A549 (cell line): ENCODE measurements at regions of chr11 and their contacts with region 1.

Region 1: DNA sequence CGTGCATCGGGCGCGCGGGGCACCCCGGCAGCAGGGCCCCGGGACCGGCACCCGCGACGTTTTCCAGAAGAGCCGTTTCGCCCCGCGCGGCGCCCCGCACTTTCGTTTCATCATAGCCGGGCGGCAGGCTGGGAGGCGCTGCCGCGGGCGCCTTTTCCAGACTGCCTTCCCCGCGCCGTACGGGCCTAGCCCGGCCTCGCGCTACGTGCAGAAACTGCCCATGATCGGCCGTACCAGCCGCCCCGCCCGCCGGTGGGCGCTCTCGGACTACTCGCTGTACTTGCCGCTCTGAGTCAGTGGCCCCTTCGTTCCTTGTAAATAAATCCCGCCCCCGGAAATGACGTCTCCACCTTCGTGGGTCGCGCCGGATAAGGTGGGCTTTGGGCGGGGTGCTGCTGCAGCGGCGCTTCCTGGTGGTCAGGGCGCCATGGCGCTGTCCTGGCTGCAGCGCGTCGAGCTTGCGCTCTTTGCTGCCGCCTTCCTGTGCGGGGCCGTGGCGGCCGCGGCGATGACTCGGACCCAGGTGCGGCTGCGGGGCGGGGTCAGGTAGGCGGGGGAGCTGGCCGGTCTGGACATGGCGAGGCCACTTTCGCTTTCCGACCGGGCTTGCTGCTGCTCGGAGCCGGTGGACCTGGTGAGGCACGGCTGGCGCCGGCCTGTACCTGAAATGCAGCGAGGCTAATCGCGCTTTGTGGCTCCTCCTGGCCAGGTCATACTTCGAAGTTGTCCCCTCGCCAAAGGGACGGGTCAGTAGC is at the start of gene TMEM179B:
- DNase-seq: peak; percentile 93 to 98
- ATAC-seq: peak; percentile 77 to 79
- H3K4me3 ChIP-seq: peak within 1 kb of the TSS; percentile 78
- H3K27ac ChIP-seq: peak within 1 kb of the TSS; percentile 89 to 96
- H3K4me1 ChIP-seq: peaks cover 33% of the 10 kb centered on the region
- CTCF ChIP-seq: no peak; the same call in 2 of the 3 replicates
- EP300 ChIP-seq: no peak
- POLR2A ChIP-seq: peak; percentile 97
- RAD21 ChIP-seq: peak; percentile 29 to 38; a peak in 2 of 5 replicates
- polyA plus RNA-seq, gene TMEM179B: 64.7 and 105 TPM in 2 replicates

Region 2: DNA sequence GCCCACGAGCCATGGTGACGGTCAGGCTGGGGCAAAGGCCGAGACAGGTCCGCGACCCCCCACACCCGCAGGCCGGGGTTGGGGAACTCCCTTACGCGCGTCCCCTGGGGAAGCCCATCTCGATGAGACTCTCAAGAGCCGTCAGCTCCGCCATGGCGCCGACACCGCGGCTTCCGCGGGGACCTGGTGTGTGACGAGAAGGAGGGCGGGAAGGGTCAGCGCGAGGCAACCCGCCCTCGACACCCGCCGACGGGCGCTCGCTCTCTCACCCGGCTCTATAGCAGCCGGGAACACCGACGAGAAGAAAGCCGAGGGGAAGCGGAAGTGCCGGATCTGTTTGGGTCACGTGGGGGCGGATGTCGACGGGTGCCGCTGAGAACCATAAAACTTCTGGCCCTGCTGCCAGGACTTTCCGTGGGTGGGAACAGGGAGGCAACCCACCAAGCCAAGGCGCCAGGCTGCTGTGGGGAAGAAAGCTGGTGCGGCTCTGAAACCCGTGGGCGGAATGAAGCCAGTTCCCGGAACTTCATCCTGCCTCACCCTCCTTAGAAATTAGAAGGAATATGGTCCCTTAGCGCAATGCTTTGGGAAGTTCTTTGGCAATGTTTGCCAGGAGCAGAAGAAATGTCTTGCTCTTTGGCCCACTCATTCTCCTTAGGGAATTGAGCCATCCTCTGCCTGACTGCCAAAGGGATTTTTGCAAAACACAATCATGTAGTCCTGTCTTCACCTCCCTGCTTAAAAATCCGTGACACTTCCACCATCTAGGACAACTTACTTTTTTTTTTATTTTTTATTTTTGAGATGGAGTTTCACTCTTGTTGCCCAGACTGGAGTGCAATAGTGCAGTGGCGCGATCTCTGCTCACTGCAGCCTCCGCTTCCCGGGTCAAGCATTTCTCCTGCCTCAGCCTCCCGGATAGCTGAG is 108.1 kb before region 1 on chr11 and contains the start of gene UBXN1:
- CTCF ChIA-PET with region 1: interaction called, 13 read pairs
- POLR2A ChIA-PET with region 1: interaction called, 3 read pairs
- DNase-seq: peak; percentile 87 to 92
- ATAC-seq: peak; percentile 84 to 86
- H3K4me3 ChIP-seq: peak within 1 kb of the TSS; percentile 67
- H3K27ac ChIP-seq: peak within 1 kb of the TSS; percentile 87 to 92
- H3K4me1 ChIP-seq: peaks cover 24% of the 10 kb centered on the region
- CTCF ChIP-seq: no peak
- EP300 ChIP-seq: no peak
- POLR2A ChIP-seq: peak; percentile 57
- RAD21 ChIP-seq: no peak
- polyA plus RNA-seq, gene UBXN1: 56.8 and 120 TPM in 2 replicates

Region 3: DNA sequence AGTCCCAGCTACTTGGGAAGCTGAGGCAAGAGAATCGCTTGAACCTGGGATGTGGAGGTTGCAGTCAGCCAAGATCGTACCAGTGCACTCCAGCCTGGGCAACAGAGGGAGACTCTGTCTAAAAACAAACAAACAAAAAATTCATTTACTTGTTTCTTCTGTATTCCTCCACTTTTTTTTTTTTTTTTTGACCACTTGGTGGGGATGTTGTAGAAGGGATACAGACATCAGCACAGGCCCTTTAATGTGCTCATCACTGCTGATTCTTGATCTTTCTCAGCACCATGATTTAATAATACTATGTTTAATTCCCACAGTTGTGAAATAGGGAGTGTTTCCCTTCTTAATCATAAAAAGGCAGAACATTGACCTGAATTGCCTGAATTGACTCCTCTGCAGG is 54.4 kb before region 1 on chr11:
- CTCF ChIA-PET with region 1: interaction called, 16 read pairs
- POLR2A ChIA-PET with region 1: interaction called, 27 read pairs
- DNase-seq: peak in 1 of 2 experiments; percentile 56
- ATAC-seq: peak in 1 of 2 experiments; percentile 31; a peak in 2 of 6 replicates
- H3K4me3 ChIP-seq: no peak overlapping the region
- H3K27ac ChIP-seq: no peak overlapping the region
- H3K4me1 ChIP-seq: peaks cover 15% of the 10 kb centered on the region; the same call in 2 of the 3 replicates
- CTCF ChIP-seq: peak; percentile 41
- EP300 ChIP-seq: no peak
- POLR2A ChIP-seq: no peak
- RAD21 ChIP-seq: peak; percentile 40 to 50; a peak in 4 of 5 replicates

Region 4: DNA sequence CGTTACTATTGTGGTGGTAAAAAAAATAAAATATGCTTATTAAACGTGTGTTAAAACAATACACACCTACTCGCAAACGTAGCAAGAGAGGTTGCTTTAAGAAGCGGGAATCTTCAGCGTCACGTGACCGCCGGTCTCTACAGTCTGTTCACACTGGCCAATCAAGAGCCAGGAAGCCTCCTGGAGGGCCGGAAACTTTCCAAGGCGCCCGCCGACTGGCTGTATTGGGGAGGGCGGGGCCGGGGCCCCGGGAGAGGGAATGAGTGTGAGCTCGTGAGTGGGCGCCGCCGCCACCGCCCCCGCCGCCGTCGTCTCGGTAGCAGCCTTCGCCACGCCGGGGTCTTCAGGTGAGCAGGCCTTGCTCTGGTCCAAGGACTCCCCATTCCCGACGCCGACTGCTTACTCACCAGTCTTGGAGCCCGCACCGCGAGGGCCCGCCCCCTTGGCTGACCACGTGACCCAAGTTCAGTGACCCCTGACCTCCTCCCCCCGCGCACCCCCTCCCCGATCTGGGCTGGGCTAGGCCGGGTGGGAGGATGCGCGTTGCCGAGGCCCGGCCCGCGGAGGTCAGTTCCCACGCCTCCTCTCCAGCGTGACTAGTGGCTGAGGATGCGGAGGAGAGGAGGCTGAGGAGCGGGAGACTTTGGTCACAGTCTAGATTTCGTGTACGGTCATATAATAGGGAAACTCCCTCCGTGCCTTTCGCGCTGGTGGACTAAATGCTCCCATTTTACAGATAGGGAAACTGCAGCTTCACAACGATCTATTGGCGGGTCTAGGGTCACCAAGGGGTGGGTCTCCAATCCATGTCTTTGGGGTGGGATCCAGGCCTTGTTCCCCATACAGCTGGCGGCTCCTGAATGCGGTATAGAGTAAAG is 15.8 kb before region 1 on chr11 and contains the start of gene TAF6L:
- CTCF ChIA-PET with region 1: interaction called, 211 read pairs
- POLR2A ChIA-PET with region 1: interaction called, 27 read pairs
- DNase-seq: peak; percentile 97 to 98
- ATAC-seq: peak; percentile 96 to 97
- H3K4me3 ChIP-seq: peak within 1 kb of the TSS; percentile 78
- H3K27ac ChIP-seq: peak within 1 kb of the TSS; percentile 93 to 94
- H3K4me1 ChIP-seq: peaks cover 15% of the 10 kb centered on the region
- CTCF ChIP-seq: no peak
- EP300 ChIP-seq: no peak
- POLR2A ChIP-seq: peak; percentile 55
- RAD21 ChIP-seq: no peak
- polyA plus RNA-seq, gene TAF6L: 14.0 and 17.5 TPM in 2 replicates

Region 5: DNA sequence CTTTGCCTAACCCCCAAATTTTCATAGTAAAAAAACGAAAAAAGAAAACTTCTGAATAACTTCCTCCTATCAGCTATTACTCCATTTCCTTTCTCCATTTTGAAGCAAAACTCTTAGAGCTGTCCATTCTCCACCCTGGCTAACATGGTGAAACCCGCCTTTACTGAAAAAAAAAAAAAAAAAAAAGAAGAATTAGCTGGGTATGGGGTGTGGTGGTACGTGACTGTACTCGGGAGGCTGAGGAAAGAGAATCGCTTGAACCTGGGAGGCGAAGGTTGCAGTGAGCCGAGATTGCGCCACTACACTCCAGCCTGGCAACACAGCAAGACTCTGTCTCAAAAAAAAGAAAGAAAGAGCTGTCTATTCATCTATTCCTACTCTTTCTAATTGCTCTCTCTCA is 29.4 kb after region 1 on chr11:
- CTCF ChIA-PET with region 1: interaction called, 14 read pairs
- POLR2A ChIA-PET with region 1: no interaction called
- DNase-seq: no peak
- ATAC-seq: no peak
- H3K4me3 ChIP-seq: no peak overlapping the region
- H3K27ac ChIP-seq: no peak overlapping the region
- H3K4me1 ChIP-seq: no peaks in the 10 kb centered on the region
- CTCF ChIP-seq: no peak
- EP300 ChIP-seq: no peak
- POLR2A ChIP-seq: no peak
- RAD21 ChIP-seq: no peak

Region 6: DNA sequence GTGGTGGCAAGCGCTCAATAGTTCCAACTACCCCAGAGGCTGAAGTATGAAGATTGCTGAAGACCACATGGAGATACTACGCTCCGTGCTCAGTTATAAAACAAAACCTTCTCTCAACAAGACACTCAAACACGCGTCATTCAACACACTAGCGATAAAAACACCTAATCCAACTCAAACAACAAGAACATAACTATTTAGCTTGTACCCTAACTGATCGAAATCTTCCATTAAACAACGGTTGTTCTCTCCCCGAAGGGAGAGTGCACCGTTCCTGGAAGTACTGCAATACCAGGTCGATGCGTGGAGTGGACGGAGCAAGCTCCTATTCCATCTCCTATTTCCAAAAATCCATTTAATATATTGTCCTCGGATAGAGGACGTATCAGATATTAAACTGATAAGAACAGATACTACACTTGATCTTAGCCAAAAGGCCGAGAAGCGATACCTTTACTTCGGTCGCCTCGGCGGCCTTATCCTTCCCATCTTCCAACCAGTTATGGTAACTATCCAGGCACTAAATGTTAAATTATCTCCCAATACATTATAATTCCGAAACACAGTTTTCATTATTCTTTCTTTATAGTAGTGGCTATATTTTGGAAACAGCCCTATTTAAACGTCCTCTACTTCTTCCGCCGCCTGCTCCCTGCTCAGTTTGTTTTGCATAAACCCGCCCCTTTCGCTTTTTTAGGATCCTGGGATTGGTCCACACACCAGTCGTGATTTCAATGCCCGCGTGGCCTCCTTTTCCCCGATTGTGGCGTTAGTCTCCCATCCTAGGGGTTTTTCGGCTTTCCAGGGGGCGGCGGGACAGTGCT is 54.4 kb after region 1 on chr11:
- CTCF ChIA-PET with region 1: interaction called, 8 read pairs
- POLR2A ChIA-PET with region 1: interaction called, 59 read pairs
- DNase-seq: peak; percentile 97 to 99
- ATAC-seq: peak; percentile 87 to 91
- H3K4me3 ChIP-seq: peak overlapping the region; percentile 89
- H3K27ac ChIP-seq: peak overlapping the region; percentile 94 to 99
- H3K4me1 ChIP-seq: peaks cover 16% of the 10 kb centered on the region
- CTCF ChIP-seq: no peak
- EP300 ChIP-seq: peak in 1 of 2 experiments; percentile 49; a peak in 1 of 5 replicates
- POLR2A ChIP-seq: peak; percentile 95
- RAD21 ChIP-seq: no peak

Region 7: DNA sequence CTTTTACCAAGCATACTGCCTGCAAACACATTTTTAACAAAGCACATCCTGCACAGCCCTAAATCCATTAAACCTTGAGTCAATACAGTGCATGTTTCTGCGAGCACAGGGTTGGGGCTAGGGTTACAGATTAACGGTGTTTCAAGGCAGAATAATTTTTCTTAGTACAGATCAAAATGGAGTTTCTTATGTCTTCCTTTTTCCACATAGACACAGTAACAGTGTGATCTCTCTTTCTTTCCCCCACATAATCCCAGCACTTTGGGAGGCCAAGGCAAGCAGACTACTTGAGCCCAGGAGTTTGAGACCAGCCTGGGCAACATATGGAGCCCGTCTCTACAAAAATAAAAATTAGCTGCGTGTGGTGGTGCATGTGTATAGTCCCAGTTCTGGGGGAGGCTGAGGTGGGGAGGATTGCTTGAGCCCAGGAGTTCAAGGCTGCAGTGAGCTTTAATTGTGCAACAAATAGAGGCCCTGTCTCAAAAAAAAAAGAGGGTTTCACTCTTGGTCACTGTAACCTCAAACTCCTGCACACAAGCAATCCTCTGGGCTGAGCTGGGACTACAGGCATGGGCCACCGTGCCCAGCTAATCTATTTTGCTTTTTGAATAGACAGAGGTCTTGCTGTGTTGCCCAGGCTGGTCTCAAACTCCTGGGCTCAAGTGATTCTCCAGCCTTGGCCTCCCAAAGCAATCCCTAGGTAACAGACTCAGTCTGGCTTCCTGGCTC is 73.8 kb after region 1 on chr11:
- CTCF ChIA-PET with region 1: interaction called, 32 read pairs
- POLR2A ChIA-PET with region 1: interaction called, 5 read pairs
- DNase-seq: no peak
- ATAC-seq: no peak
- H3K4me3 ChIP-seq: no peak overlapping the region
- H3K27ac ChIP-seq: peak overlapping the region in 1 of 2 experiments; percentile 23; a peak in 3 of 6 replicates
- H3K4me1 ChIP-seq: peaks cover 33% of the 10 kb centered on the region
- CTCF ChIP-seq: no peak
- EP300 ChIP-seq: no peak
- POLR2A ChIP-seq: no peak
- RAD21 ChIP-seq: no peak